Activated CD8-positive, alpha-beta T cell treated with anti-CD3 and anti-CD28 coated beads, Interleukin-2, amount 10 ng/mL, durations not matched to agents 7 days and 5 days (primary cell): ENCODE measurements at regions of chr12 and their contacts with region 1.

Region 1: DNA sequence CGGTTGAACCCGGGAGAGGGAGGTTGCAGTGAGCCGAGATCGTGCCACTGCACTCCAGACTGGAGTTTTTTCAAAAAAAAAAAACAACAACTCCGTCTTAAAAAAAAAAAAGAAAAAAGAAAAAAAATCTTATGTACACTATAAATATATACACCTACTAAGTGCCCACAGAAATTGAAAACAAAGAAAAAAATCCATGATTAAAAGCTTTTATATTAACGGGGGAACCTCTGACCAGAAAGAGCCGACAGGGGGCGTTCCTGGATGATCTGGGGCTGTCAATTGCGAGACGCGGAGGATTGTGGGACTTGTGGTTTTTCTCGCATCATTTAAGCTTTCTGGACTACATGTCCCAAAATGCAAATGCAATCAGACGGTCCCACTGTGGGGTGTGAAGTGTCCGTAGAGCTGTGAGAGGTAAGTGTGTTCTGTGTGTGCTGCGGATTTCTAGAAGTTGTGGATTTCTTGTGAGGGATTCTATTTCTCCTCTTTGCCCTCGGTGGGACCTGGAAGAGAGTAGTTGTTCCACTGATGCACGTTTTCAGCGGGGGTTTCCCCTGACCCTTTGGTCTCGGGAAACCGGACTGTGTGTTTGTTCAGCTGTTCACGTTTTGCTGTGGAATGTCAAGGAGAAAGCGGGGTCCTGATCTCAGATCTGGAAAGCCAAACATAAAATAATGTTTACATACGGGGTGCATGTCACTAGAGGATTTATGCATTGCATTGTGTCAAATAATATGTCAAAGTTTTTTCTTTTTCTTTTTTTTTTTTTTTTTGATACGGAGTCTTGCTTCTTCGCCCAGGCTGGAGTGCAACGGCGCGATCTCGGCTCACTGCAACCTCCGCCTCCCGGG is at the start of gene SIRT4:
- DNase-seq: peak; percentile 96
- ATAC-seq: peak; percentile 99
- H3K4me3 Mint-ChIP-seq: peak within 1 kb of the TSS; percentile 90
- H3K27ac Mint-ChIP-seq: peak within 1 kb of the TSS; percentile 78
- H3K4me1 Mint-ChIP-seq: peaks cover 9% of the 10 kb centered on the region
- H3K27me3 Mint-ChIP-seq: no peaks in the 10 kb centered on the region
- total RNA-seq, gene SIRT4: 1.2 to 1.4 TPM

Region 2: GRCh38 chr12:120317224-120318105 is 15.3 kb after region 1 on chr12:
- CTCF ChIA-PET with region 1: interaction called, 51 read pairs
- POLR2A ChIA-PET with region 1: interaction called, 7 read pairs
- DNase-seq: peak; percentile 100
- ATAC-seq: peak; percentile 100
- H3K4me3 Mint-ChIP-seq: peak overlapping the region; percentile 83
- H3K27ac Mint-ChIP-seq: peak overlapping the region; percentile 86
- H3K4me1 Mint-ChIP-seq: peaks cover 13% of the 10 kb centered on the region
- H3K27me3 Mint-ChIP-seq: no peaks in the 10 kb centered on the region

Region 3: DNA sequence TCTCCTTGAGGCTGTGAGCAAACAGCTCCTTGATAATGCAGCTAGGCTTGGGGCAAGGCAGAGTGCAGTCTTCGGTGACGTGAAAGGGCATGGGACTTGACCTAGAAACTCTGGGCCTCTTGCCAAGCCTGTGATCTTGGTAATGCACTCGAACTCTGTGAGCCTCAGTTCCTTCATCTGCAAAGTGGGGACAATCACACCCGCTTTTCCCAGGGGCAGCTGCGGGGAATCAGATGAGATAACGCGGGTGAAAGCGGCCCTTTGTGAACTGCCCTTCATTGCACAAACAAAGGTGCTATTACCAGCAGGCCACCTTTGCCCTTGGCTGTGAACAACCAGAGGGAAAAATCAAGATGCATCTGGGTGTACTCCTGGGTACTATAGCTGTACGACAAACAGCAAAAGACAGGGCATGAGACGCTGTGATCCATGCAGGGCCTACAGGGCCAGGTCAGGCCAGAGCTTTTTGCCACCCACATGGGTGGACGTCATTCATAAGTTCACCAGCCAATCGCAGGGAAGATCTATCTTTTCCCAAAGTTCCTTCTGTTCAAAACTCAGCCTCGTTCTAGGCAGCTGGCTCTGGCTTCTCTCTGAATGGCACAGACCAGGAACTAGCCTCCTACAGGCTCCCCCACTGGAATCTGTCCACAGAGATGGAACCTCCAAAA is 63.6 kb after region 1 on chr12:
- CTCF ChIA-PET with region 1: no interaction called
- POLR2A ChIA-PET with region 1: no interaction called
- DNase-seq: no peak
- ATAC-seq: no peak
- H3K4me3 Mint-ChIP-seq: no peak overlapping the region
- H3K27ac Mint-ChIP-seq: no peak overlapping the region
- H3K4me1 Mint-ChIP-seq: peaks cover 10% of the 10 kb centered on the region
- H3K27me3 Mint-ChIP-seq: peaks cover 68% of the 10 kb centered on the region

Region 4: DNA sequence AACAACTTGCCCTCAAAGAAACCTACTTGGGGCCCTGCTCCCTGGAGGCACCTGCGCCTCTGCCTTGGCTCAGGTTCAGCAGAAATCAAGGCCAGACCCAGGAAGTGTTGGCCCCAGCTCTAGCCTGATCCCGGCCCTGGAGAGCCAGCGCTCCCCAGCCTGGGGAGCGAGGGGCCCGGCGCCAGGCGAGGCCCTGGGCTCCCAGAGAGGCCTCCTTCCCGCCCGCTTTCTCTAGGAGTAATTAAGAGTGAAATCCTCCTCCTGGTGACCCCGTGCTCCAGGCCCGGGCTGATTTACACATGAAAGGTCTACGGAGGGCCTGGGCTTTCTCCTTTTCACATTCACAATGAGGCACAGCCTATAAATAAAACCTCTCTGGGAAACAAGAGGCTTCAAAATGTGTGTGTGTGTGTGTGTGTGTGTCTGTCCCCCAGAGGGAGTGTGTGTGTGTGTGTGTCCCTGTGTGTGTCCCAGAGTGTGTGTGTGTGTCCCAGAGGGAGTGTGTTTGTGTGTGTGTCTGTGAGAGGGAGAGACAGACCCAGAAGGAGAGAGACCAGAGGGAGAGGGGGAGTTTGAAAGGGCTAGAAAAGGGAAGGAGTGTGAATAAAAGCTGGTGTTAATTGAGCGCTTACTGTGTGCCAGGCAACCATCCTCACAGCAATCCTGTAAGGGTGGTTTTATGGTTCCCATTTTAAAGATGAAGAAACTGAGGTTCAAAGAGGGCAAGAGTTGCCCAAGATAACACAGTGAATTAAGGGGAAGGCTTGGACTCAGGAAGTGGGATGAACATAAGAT is 111.9 kb after region 1 on chr12:
- CTCF ChIA-PET with region 1: no interaction called
- POLR2A ChIA-PET with region 1: no interaction called
- DNase-seq: no peak
- ATAC-seq: no peak
- H3K4me3 Mint-ChIP-seq: no peak overlapping the region
- H3K27ac Mint-ChIP-seq: no peak overlapping the region
- H3K4me1 Mint-ChIP-seq: no peaks in the 10 kb centered on the region
- H3K27me3 Mint-ChIP-seq: peaks cover 11% of the 10 kb centered on the region